HepG2 (cell line): ENCODE measurements at regions of chr17 and their contacts with region 1.

Region 1: DNA sequence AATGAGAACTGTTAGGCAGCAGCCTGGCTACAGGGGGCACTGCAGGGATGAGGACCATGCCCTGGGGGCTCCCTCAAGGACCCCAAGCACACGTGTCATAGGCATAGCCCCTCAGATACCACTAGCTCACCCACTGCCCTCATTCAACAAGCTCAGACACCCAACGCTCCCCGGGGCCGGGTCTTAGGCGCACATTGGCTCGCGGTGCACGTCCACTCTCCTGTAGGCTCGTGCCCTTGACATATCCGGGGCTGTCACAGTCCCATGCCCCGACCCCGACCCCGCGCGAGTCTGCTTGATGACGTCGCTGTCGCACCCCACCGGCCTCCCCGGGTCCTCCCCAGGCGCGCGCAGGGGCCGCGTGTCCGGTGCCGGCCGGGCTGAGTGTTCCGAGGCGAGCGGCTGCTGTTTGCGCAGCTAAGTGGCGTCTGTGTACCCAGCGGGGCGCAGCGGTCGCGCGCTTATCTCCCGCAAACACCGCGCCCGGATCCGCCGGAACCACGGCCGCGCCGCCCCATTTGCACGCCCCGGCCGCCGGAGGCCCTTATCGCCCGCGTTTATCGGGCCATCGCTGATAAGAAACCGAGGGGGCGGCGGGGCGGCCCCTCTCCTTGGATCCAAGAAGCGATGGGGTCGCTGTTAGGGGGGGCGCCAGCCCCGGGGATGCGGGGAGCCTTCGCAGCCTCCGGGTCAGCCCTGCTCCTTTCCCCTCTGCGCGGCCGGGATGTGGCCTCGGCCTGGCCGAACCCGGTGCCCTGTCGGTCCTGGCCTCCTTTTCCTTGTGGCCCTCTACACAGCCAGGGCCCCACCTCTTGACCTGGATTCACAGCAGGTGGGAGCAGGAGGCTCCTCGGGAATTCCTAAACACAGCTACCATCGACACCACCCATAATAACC is 20.7 kb upstream of the NAGS start:
- DNase-seq: peak; percentile 67
- ATAC-seq: peak; percentile 93
- H3K4me3 ChIP-seq: peak overlapping the region; percentile 41 to 72 (median 51)
- H3K27ac ChIP-seq: no peak overlapping the region
- H3K4me1 ChIP-seq: peaks cover 23% of the 10 kb centered on the region
- H3K27me3 ChIP-seq: peaks cover 6 to 79% of the 10 kb centered on the region in 2 experiments
- CTCF ChIP-seq: peak; percentile 60
- EP300 ChIP-seq: peak in 1 of 2 experiments; percentile 77; a peak in 2 of 4 replicates
- POLR2A ChIP-seq: no peak
- RAD21 ChIP-seq: peak; percentile 10; the same call in 1 of the 2 replicates

Region 2: GRCh38 chr17:44005527-44006271 is 21.9 kb after region 1 on chr17:
- CTCF ChIA-PET with region 1: no interaction called
- POLR2A ChIA-PET with region 1: interaction called, 15 read pairs
- in situ Hi-C with region 1: no loop called
- intact Hi-C with region 1: no loop called
- DNase-seq: no peak
- ATAC-seq: no peak
- H3K4me3 ChIP-seq: peak overlapping the region; percentile 52 to 80 (median 56)
- H3K27ac ChIP-seq: no peak overlapping the region
- H3K4me1 ChIP-seq: peaks cover 51% of the 10 kb centered on the region
- H3K27me3 ChIP-seq: no peaks in the 10 kb centered on the region
- CTCF ChIP-seq: peak; percentile 34
- EP300 ChIP-seq: no peak
- POLR2A ChIP-seq: no peak
- RAD21 ChIP-seq: no peak

Region 3: DNA sequence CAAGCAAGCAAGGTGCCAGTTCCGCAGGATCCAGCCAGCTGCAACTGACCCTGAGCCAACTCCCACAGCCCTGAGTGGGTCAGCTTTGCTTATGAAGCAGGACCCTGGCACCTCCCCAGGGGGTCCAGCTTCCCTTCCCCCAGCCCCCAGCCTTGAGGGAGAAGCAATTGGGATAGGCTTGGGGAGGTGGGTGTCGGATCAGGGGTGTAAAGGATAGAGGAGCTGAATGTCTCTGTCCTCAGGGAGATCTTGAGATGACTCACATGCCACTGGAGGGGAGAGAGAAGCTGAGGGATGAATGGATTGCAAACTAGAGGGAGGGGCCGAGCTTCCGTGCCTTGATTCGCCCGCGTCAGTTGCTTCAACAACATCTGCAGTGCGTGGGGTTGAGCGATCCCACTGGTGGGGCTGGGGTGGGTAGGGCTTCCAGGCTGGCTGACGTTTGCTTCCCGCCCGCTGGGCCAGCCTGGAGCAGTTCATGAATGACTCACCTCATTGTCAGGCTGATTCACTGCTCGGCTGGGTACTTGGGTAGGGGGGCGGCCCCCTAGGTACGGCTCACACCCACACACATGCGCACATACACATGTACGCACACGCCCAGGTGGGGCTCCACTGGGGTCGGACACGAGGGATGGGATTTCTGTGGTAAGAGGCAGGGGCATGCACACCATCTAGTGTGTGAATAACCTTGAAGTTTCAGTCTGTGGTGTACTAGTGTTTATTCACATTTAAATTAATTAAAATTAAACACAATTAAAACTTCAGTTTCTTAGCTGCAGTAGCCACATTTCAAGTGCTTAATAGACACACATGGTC is 154.3 kb after region 1 on chr17:
- CTCF ChIA-PET with region 1: no interaction called
- POLR2A ChIA-PET with region 1: no interaction called
- in situ Hi-C with region 1: no loop called
- intact Hi-C with region 1: no loop called
- DNase-seq: peak; percentile 87
- ATAC-seq: peak; percentile 78
- H3K4me3 ChIP-seq: peak overlapping the region; percentile 34 to 61 (median 39)
- H3K27ac ChIP-seq: peak overlapping the region; percentile 54
- H3K4me1 ChIP-seq: peaks cover 66% of the 10 kb centered on the region
- H3K27me3 ChIP-seq: no peaks in the 10 kb centered on the region; a peak in 1 of 5 replicates
- CTCF ChIP-seq: no peak; the same call in 1 of the 2 replicates
- EP300 ChIP-seq: no peak
- POLR2A ChIP-seq: peak in 1 of 2 experiments; percentile 75; a peak in 2 of 4 replicates
- RAD21 ChIP-seq: peak; percentile 25; the same call in 1 of the 2 replicates

Region 4: DNA sequence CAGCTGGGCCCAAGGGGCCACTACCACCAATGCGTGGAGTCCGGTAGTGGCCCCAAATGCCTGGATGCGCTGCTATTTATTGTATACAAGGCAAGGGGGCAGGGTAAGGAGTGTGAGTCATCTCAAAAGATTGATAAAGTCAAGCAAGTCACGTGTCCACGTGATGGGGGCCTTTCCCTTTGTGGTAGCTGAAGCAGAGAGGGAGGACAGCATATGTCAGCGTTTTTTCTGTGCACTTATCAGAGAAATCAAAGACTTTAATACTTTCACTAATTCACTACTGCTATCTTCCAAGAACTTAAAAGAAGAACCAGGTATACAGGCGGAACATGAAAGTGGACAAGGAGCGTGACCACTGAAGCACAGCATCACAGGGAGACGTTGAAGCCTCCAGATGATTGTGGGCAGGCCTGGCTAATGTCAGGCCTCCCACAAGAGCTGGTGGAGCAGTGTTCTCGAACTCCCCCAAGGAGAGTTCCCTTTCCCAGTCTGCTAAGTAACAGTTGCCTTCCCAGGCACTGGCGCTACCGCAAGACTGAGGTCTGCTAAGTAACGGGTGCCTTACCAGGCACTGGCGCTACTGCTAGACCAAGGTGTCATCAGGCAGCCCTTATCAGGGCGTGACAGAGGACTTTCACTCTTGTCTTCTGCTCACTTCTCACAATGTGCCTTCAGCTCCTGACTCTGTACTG is 175.9 kb after region 1 on chr17:
- CTCF ChIA-PET with region 1: no interaction called
- POLR2A ChIA-PET with region 1: no interaction called
- in situ Hi-C with region 1: no loop called
- intact Hi-C with region 1: no loop called
- DNase-seq: no peak
- ATAC-seq: no peak
- H3K4me3 ChIP-seq: no peak overlapping the region
- H3K27ac ChIP-seq: no peak overlapping the region
- H3K4me1 ChIP-seq: peaks cover 9% of the 10 kb centered on the region
- H3K27me3 ChIP-seq: no peaks in the 10 kb centered on the region
- CTCF ChIP-seq: no peak
- EP300 ChIP-seq: no peak
- POLR2A ChIP-seq: no peak
- RAD21 ChIP-seq: no peak